ENCODE measurements at regions of chr7 and their contacts with region 1.

Region 1: DNA sequence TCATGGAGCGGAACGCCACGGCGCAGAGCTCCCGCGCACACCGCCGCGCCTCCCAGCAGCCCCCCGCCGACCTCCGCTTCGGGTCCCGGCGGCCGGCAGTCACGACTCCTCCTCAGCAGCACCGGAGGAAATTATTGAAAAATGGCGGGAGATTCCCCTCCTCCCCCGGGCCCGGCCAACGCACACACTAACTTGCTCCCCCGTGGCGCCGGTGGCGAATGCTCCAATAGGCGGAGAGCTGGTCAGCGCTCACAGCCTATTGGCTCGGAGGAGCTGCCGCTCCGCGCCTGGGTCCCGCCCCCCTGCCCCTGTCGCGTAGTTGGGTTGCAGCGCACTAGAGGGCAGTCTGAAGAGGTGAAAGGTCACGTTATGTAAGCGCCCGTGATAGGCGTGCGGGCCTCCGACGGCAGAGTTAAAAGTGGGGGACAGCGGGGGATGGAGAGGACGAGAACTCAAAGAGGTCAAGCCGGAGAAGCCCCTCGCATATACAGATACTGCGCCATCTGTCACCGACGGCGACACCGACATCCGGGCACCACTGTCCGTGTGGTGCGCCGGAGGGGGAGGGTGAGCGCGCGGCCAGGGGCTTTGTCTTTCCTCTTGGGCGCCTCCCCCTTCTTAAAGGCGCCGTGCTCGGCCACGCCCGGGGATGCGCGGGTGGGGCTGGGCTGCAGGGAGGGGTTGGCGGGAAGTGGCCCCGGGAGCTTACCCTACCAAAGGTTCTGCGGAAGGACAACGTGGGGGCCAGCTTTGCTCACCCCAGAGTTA is at the start of gene BAZ1B:
- DNase-seq: peak; percentile 96 to 97 (median 96)
- H3K4me3 ChIP-seq: peak within 1 kb of the TSS; percentile 54 to 91 (median 64)
- H3K4me3 Mint-ChIP-seq: peak within 1 kb of the TSS; percentile 93 to 97
- H3K27ac ChIP-seq: peak within 1 kb of the TSS; percentile 70 to 90
- H3K27ac Mint-ChIP-seq: peak within 1 kb of the TSS; percentile 93 to 99 (median 97)
- H3K4me1 ChIP-seq: peaks cover 38 to 53% of the 10 kb centered on the region in 2 donors
- H3K4me1 Mint-ChIP-seq: peaks cover 48% of the 10 kb centered on the region
- H3K27me3 ChIP-seq: no peaks in the 10 kb centered on the region
- H3K27me3 Mint-ChIP-seq: no peaks in the 10 kb centered on the region
- CTCF ChIP-seq: peak; percentile 19
- polyA plus RNA-seq, gene BAZ1B: 2.5 to 12.1 (median 5.0) TPM

Region 2: GRCh38 chr7:73468097-73468496 is 54.2 kb before region 1 on chr7:
- intact Hi-C with region 1: no loop called
- DNase-seq: no peak
- H3K4me3 ChIP-seq: no peak overlapping the region
- H3K4me3 Mint-ChIP-seq: no peak overlapping the region
- H3K27ac ChIP-seq: no peak overlapping the region
- H3K27ac Mint-ChIP-seq: no peak overlapping the region
- H3K4me1 ChIP-seq: no peaks in the 10 kb centered on the region
- H3K4me1 Mint-ChIP-seq: no peaks in the 10 kb centered on the region
- H3K27me3 ChIP-seq: no peaks in the 10 kb centered on the region
- H3K27me3 Mint-ChIP-seq: no peaks in the 10 kb centered on the region
- CTCF ChIP-seq: no peak

Region 3: GRCh38 chr7:73557108-73557396 is 34.8 kb after region 1 on chr7:
- intact Hi-C with region 1: loop called (anchors 2 to 5 kb)
- DNase-seq: peak; percentile 93 to 94 (median 93)
- H3K4me3 ChIP-seq: peak overlapping the region; percentile 73 to 99 (median 75)
- H3K4me3 Mint-ChIP-seq: peak overlapping the region; percentile 86 to 92
- H3K27ac ChIP-seq: peak overlapping the region; percentile 87 to 93
- H3K27ac Mint-ChIP-seq: peak overlapping the region; percentile 93 to 98 (median 96)
- H3K4me1 ChIP-seq: peaks cover 21 to 23% of the 10 kb centered on the region in 2 donors
- H3K4me1 Mint-ChIP-seq: peaks cover 34% of the 10 kb centered on the region
- H3K27me3 ChIP-seq: no peaks in the 10 kb centered on the region
- H3K27me3 Mint-ChIP-seq: peaks cover 1 to 7% (median 5%) of the 10 kb centered on the region in 3 donors
- CTCF ChIP-seq: no peak

Region 4: GRCh38 chr7:73567846-73568685 is 45.8 kb after region 1 on chr7:
- intact Hi-C with region 1: no loop called
- DNase-seq: no peak
- H3K4me3 ChIP-seq: no peak overlapping the region
- H3K4me3 Mint-ChIP-seq: no peak overlapping the region
- H3K27ac ChIP-seq: no peak overlapping the region
- H3K27ac Mint-ChIP-seq: no peak overlapping the region
- H3K4me1 ChIP-seq: peaks cover 7 to 13% of the 10 kb centered on the region in 2 donors
- H3K4me1 Mint-ChIP-seq: peaks cover 21% of the 10 kb centered on the region
- H3K27me3 ChIP-seq: no peaks in the 10 kb centered on the region
- H3K27me3 Mint-ChIP-seq: peaks cover 3 to 4% (median 3%) of the 10 kb centered on the region in 3 donors
- CTCF ChIP-seq: no peak

Region 5: DNA sequence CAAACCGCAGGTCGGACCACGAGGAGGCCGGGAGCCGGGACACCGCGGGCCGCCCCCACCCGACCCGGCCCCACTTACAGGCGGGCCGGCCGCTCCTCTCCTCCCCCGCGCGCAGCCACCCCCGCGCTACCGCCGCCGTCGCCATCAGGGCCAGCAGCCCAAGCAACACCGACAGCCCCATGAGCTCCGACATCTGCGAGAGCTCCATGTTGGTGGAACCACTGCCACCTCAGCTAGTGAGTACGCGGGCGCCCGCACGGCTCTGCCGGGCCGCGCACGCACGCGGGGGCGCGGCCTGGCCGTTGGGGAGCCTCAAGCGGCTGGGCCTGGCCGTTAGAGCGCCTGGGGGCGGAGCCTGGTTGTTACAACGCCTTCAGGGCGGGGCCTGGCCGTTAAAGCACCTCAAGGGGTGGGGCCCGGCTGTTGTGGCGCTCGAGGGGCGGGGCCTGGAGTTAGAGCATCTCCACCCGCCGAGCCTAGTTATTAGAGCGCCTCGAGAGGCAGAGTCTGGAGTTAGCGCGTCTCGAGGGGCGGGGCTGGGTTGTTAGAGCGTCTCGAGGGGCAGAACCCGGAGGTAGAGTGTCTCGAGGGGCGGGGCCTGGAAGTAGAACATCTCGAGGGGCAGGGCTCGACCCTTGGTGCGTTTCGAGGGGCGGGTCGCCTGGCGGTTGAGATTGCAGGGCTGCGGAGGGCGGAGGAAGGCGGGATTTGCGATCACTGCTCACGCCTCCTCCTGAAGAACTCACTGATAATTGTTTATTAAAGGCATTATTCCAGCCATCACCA is 56.2 kb after region 1 on chr7 and contains the start of gene TBL2:
- intact Hi-C with region 1: loop called in 1 of 2 experiments (anchors 2 kb)
- DNase-seq: peak; percentile 97 to 100 (median 98)
- H3K4me3 ChIP-seq: peak within 1 kb of the TSS; percentile 80 to 92 (median 91)
- H3K4me3 Mint-ChIP-seq: peak within 1 kb of the TSS; percentile 88 to 94
- H3K27ac ChIP-seq: peak within 1 kb of the TSS; percentile 87 to 90
- H3K27ac Mint-ChIP-seq: peak within 1 kb of the TSS; percentile 98 to 99 (median 99)
- H3K4me1 ChIP-seq: peaks cover 59 to 69% of the 10 kb centered on the region in 2 donors
- H3K4me1 Mint-ChIP-seq: peaks cover 47% of the 10 kb centered on the region
- H3K27me3 ChIP-seq: no peaks in the 10 kb centered on the region
- H3K27me3 Mint-ChIP-seq: no peaks in the 10 kb centered on the region
- CTCF ChIP-seq: peak; percentile 4
- polyA plus RNA-seq, gene TBL2: 10.4 to 40.1 (median 26.2) TPM

Region 6: DNA sequence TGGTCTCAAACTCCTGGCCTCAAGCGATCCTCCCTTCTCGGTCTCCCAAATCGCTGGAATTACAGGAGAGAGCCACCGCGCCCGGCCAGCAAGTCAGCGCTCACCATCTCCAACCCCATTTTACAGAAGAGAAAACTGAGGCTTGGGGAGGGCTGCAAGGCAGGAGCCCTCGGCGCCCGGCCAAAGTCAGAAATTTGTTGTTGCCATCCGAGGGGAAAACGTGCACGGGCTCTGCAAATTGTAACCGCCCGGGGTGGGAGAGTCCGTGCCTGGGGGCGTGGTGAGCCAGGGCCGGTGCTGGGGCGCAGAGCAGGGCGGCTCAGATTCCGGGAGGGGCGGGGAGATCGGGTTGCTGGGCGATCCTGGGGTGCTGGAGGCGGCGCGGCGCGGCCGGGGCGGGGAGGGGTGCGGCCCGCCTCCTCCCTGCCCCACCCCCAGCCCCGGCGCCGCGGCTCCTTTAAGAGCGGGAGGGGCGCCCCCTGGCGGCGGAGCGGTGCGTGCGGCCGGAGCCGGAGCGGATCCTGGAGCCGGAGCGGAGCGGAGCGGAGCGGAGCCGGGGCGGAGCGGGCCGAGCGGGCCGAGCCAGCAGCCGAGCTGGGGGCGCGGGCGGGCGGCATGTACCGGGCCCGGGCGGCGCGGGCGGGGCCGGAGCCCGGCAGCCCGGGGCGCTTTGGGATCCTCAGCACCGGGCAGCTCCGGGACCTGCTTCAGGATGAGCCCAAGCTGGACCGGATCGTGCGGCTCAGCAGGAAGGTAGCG is 145.2 kb after region 1 on chr7 and contains the start of gene VPS37D:
- intact Hi-C with region 1: loop called in 1 of 2 experiments (anchors 10 kb)
- DNase-seq: peak; percentile 82 to 86 (median 83)
- H3K4me3 ChIP-seq: peak within 1 kb of the TSS; percentile 8 to 63 (median 17)
- H3K4me3 Mint-ChIP-seq: peak within 1 kb of the TSS; percentile 69 to 76
- H3K27ac ChIP-seq: no peak within 1 kb of the TSS
- H3K27ac Mint-ChIP-seq: peak within 1 kb of the TSS in 1 of 7 donors; percentile 66
- H3K4me1 ChIP-seq: peaks cover 9 to 13% of the 10 kb centered on the region in 2 donors
- H3K4me1 Mint-ChIP-seq: peaks cover 12% of the 10 kb centered on the region
- H3K27me3 ChIP-seq: peaks cover 25 to 66% of the 10 kb centered on the region in 2 donors
- H3K27me3 Mint-ChIP-seq: peaks cover 66 to 91% (median 76%) of the 10 kb centered on the region in 3 donors
- CTCF ChIP-seq: peak; percentile 73
- polyA plus RNA-seq, gene VPS37D: not detected

Region 7: GRCh38 chr7:73738612-73739374 is 216.5 kb after region 1 on chr7 and contains the start of gene ABHD11:
- intact Hi-C with region 1: loop called in 1 of 2 experiments (anchors 5 kb)
- DNase-seq: peak; percentile 84 to 95 (median 93)
- H3K4me3 ChIP-seq: peak within 1 kb of the TSS; percentile 60 to 87 (median 78)
- H3K4me3 Mint-ChIP-seq: peak within 1 kb of the TSS; percentile 93
- H3K27ac ChIP-seq: peak within 1 kb of the TSS; percentile 62 to 77
- H3K27ac Mint-ChIP-seq: peak within 1 kb of the TSS; percentile 78 to 95 (median 90)
- H3K4me1 ChIP-seq: peaks cover 26 to 36% of the 10 kb centered on the region in 2 donors
- H3K4me1 Mint-ChIP-seq: peaks cover 20% of the 10 kb centered on the region
- H3K27me3 ChIP-seq: peaks cover 0 to 12% of the 10 kb centered on the region in 2 donors
- H3K27me3 Mint-ChIP-seq: peaks cover 12 to 29% (median 29%) of the 10 kb centered on the region in 3 donors
- CTCF ChIP-seq: no peak
- polyA plus RNA-seq, gene ABHD11: 20.3 to 23.5 (median 22.1) TPM

Region 8: DNA sequence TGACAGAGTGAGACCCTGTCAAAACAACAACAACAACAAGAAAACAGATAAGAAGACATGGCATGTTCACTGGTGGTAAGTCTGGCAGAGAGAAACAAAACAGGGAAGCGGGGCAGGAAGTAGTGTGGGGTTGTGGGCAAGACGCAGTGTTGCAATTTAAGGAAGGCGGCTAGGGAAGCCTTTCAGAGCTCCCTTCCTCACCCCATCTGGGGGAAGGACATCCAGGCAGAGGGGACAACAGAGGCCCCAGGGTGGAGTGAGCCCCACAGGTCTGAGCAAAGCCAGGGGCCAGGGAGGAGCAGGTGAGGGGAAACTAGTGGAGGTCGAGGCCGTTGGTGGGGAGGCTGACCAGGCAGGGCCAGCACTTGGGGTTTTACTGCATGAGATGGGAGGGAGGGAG is 704.3 kb after region 1 on chr7:
- intact Hi-C with region 1: no loop called
- DNase-seq: peak; percentile 71 to 88 (median 85)
- H3K4me3 ChIP-seq: peak overlapping the region in 1 of 3 experiments; percentile 62
- H3K4me3 Mint-ChIP-seq: peak overlapping the region; percentile 66 to 81
- H3K27ac ChIP-seq: peak overlapping the region; percentile 31 to 80
- H3K27ac Mint-ChIP-seq: peak overlapping the region; percentile 84 to 98 (median 92)
- H3K4me1 ChIP-seq: peaks cover 81 to 93% of the 10 kb centered on the region in 2 donors
- H3K4me1 Mint-ChIP-seq: peaks cover 82% of the 10 kb centered on the region
- H3K27me3 ChIP-seq: no peaks in the 10 kb centered on the region
- H3K27me3 Mint-ChIP-seq: peaks cover 0 to 2% (median 0%) of the 10 kb centered on the region in 3 donors
- CTCF ChIP-seq: no peak

Measured in CD14-positive monocyte (primary cell).